ENCODE measurements at regions of chr3 and their contacts with region 1.

Region 1: DNA sequence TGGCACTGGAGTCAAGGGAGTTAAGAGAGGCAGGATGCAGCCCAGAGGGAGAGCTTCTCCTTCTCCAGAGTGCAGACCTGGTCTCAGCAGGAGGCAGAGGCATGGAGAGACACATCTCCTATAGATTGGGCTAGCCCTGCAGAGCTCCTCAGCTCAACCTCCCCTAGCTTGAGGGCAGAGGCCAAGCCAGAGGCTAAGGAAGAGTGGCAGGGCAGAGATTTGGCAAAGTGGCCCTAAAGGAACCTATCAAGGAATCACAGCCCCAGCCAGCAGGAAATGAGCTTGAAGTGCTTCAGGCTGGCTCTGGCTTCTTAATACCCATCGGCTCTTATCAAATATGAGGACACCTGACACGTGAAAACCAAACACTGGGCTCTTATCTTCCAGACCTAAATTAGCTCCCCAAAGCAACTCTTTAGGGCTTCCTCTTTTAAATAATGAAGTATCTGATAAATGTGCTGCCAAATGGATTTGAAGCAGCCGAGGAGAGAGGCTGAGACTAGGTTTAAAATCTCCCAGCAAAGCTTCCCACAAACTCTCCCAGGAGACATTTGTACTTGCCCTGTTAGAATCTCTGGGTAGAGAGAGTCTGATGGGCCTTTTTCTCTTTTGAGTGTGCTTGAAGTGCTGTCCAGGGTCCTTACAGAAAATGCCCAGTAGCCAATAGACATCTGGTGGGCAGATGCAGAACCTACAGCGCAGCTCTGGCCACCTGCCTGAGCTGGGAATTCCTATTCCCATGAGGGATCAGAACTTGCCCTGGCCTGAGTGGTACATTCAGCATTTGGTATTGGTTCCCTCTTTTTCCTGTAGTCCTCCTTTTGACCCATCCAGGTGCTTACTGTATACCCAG is 271.4 kb downstream of the CLSTN2 start:
- DNase-seq: no peak
- H3K4me3 ChIP-seq: no peak overlapping the region
- H3K27ac ChIP-seq: no peak overlapping the region
- H3K27me3 ChIP-seq: peaks cover 0 to 3% (median 0%) of the 10 kb centered on the region in 45 donors
- CTCF ChIP-seq: peak in 14 of 56 donors; percentile 6 to 39 (median 18)

Region 2: DNA sequence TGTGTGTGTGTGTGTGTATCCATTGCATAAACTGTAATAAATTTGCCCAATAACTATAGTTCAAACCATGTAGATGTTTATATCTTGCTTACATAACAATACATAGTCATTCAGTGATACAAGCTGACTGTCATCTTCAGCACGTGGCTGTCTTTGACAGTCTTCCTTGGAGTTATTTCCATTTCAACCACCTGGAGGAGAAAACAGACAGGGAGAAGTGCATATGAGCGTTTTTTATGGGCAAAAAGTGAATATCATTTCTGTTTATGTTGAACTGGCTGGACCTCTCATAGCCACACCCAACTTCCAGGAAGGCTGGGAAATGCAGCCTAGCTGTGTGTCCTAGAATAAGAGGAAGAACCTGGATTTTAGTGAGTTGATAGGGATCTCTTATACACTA is 348.9 kb before region 1 on chr3:
- intact Hi-C with region 1: no loop called
- DNase-seq: no peak
- H3K4me3 ChIP-seq: no peak overlapping the region
- H3K27ac ChIP-seq: no peak overlapping the region
- H3K27me3 ChIP-seq: peaks cover 0 to 4% (median 0%) of the 10 kb centered on the region in 45 donors
- CTCF ChIP-seq: no peak

Region 3: DNA sequence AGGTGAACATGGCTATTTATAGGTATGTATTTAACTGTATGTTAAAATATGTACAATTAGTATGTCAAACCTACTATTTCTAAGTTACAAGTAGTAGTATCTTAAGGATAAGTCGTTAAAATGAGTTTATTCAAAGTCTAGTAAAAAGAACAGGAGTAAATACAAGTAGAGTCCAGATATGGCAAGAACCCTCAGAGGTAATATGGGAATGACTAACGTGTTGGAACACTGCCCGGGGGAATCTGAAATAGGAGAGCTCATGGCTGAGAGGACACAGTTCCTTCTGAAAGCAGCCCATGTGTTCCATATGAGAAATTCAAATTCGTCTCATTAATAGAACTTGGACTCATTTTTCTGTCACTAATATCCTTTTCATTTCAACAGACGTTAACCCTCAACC is 112.7 kb before region 1 on chr3:
- intact Hi-C with region 1: loop called in 1 of 2 experiments (anchors 5 kb)
- DNase-seq: peak in 4 of 10 donors; percentile 12 to 70 (median 48)
- H3K4me3 ChIP-seq: no peak overlapping the region
- H3K27ac ChIP-seq: no peak overlapping the region
- H3K27me3 ChIP-seq: no peaks in the 10 kb centered on the region
- CTCF ChIP-seq: no peak

Region 4: GRCh38 chr3:140332131-140332530 is 125.7 kb after region 1 on chr3:
- intact Hi-C with region 1: no loop called
- DNase-seq: no peak
- H3K4me3 ChIP-seq: no peak overlapping the region
- H3K27ac ChIP-seq: no peak overlapping the region
- H3K27me3 ChIP-seq: no peaks in the 10 kb centered on the region
- CTCF ChIP-seq: no peak

Region 5: GRCh38 chr3:140349938-140350337 is 143.5 kb after region 1 on chr3:
- intact Hi-C with region 1: no loop called
- DNase-seq: no peak
- H3K4me3 ChIP-seq: no peak overlapping the region
- H3K27ac ChIP-seq: no peak overlapping the region
- H3K27me3 ChIP-seq: no peaks in the 10 kb centered on the region
- CTCF ChIP-seq: no peak

Measured in dorsolateral prefrontal cortex (tissue), 120 donors.